Spleen (tissue), 13 donors: ENCODE measurements at regions of chr6 and their contacts with region 1.

Region 1: DNA sequence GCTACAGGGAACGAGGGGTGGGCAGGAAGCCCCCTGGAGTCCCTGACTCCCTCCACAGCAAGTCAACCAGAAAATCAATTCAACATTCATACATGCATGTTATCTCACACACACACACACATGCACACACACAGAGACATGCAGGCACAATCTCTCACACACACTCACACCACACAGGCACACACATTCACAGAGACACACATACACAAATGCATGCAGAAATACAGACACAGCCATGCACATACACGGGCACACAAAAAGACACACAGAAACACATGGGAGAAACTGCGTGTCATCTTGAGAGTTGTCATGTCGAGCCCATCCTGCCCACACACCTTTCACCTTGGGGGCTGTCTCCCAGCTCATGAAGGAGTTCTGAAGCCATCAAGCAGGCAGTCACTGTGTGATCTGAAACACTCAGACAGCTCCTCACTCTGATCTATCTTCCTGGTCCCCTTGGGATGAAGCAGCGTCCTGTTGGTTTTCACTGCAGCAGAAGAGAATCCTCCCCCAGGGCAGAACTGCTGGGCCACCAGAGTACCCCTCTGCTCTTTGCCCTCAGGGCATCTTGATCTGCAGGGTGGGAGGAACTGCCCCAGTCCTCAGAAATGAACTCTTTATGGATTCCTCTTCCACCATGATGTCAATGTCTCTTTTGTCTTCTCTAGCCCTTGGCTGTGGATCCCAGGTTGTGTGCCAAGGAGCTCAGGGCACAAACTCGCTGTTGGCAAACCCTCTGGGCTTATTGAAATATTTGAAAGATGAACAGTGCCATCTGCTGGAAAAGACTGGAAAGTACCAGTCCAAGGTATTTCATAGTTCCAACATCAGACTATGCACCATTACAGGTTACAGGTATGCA is 8.8 kb downstream of the RAET1L start:
- DNase-seq: peak; percentile 71
- H3K4me3 ChIP-seq: no peak overlapping the region
- H3K27ac ChIP-seq: no peak overlapping the region
- H3K4me1 ChIP-seq: peaks cover 0 to 14% (median 7%) of the 10 kb centered on the region in 6 donors
- H3K27me3 ChIP-seq: peaks cover 3 to 76% (median 51%) of the 10 kb centered on the region in 7 donors
- CTCF ChIP-seq: peak; percentile 66 to 90 (median 80)
- POLR2A ChIP-seq: no peak

Region 2: DNA sequence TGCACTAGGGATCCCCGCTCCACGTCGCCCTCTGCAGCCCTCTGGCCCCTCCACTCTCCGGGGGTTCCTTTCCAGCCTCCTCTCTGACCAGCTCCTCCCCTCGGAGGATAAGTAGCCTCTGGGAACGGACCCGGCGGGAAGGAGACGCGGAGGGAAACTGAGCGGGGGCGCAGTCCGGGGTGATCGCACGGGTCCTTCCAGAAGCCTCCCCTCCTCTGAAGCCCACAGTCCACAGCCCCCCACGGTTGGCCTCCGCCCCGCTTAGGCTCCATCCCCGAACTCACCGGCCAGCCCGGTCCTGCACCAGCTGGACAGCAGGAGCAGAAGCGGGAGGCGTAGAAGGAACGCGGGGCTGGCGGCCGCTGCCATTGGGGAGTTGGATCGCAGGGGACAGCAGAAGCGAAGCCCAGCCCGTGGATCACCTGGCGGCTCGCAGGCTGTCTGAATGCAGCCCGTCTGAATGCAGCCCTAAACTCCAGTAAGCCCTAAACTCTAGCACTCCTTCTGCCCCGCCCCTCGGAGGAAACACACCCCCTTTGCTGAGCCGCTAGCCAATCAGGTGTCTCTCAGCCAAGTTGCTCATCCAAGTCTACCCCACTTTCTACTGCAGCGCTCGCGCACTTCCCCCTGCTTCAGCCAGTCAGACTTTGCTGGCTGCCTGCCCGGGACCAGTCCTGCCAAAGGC is 93.8 kb before region 1 on chr6 and contains the start of gene RAET1G:
- intact Hi-C with region 1: no loop called
- DNase-seq: peak; percentile 92
- H3K4me3 ChIP-seq: peak within 1 kb of the TSS; percentile 32 to 72 (median 40)
- H3K27ac ChIP-seq: no peak within 1 kb of the TSS
- H3K4me1 ChIP-seq: peaks cover 0 to 35% (median 29%) of the 10 kb centered on the region in 6 donors
- H3K27me3 ChIP-seq: peaks cover 0 to 80% (median 26%) of the 10 kb centered on the region in 7 donors
- CTCF ChIP-seq: no peak
- POLR2A ChIP-seq: no peak
- total RNA-seq, gene RAET1G: 1.2 TPM in 1 of 7 donors, not detected in the others

Region 3: DNA sequence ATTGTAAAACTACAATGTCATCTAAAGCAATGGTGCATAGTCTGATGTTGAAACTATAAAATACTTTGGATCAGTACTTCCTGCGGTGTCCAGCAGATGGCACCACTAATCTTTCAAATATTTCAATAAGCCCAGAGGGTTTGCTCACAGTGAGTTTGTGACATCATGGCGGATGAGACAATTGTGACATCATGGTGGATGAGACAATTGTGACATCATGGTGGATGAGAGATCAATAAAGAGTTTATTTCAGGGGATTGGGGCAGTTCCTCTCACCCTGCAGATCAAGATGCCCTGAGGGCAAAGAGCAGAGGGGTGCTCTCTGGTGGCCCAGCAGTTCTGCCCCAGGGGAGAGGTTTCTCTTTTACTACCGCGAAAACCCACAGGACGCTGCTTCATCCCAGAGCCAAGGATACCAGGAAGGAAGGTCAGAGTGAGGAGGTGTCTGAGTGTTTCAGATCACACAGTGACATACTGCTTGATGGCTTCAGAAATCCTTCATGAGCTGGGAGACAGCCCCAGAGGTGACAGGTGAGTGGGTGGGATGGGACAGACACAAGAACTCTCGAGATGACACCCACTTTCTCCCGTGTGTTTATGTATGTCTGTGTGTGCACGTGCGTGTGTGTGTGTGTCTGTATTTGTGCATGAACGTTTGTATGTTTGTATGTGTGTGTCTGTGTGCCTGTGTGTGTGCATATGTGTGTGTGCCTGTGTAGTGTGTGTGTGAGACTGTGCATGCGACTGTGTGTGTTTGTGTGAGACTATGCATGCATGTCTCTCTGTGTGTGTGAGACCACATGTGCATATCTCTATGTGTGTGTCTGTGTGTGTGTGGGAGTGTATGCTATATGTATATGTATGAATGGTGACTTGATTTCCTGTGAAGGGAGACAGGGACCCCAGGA is 82.1 kb before region 1 on chr6:
- intact Hi-C with region 1: loop called (anchors 2 kb)
- DNase-seq: no peak
- H3K4me3 ChIP-seq: no peak overlapping the region
- H3K27ac ChIP-seq: no peak overlapping the region
- H3K4me1 ChIP-seq: peaks cover 11 to 24% (median 14%) of the 10 kb centered on the region in 6 donors
- H3K27me3 ChIP-seq: peaks cover 2 to 100% (median 81%) of the 10 kb centered on the region in 7 donors
- CTCF ChIP-seq: peak; percentile 59 to 87 (median 80)
- POLR2A ChIP-seq: no peak